Left lung (tissue), 14 donors: ENCODE measurements at regions of chr12 and their contacts with region 1.

Region 1: GRCh38 chr12:75404231-75404630 is 13.3 kb downstream of the GLIPR1L2 start:
- DNase-seq: no peak
- ATAC-seq: no peak
- H3K4me3 ChIP-seq: no peak overlapping the region
- H3K27ac ChIP-seq: no peak overlapping the region
- H3K4me1 ChIP-seq: no peaks in the 10 kb centered on the region
- H3K27me3 ChIP-seq: no peaks in the 10 kb centered on the region
- CTCF ChIP-seq: no peak

Region 2: DNA sequence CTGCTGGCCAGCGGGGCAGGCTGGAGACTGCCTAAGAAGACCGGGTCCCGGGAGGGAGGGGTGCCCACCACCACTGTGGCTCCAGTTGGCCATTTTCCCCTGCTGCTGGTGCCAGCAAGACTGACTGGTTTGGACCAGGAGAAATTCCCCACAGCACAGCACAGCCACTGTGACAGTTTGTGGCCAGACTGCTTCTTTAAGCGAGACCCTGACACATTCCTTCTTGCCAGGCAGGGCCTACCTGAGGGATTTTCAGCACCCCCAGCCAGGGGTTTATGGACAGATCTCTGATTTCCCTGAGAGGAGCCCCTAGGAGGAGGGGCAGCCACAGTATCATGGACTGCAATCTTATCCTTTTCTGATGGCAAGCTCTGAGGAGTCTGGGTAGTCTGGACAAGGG is 54.3 kb before region 1 on chr12:
- intact Hi-C with region 1: loop called in 1 of 2 experiments (anchors 10 kb)
- DNase-seq: peak in 1 of 4 donors; percentile 37
- ATAC-seq: no peak
- H3K4me3 ChIP-seq: no peak overlapping the region
- H3K27ac ChIP-seq: no peak overlapping the region
- H3K4me1 ChIP-seq: no peaks in the 10 kb centered on the region
- H3K27me3 ChIP-seq: no peaks in the 10 kb centered on the region
- CTCF ChIP-seq: no peak

Region 3: GRCh38 chr12:75511116-75512048 is 107.2 kb after region 1 on chr12 and contains the start of gene KRR1:
- intact Hi-C with region 1: no loop called
- DNase-seq: peak; percentile 89 to 98 (median 94)
- ATAC-seq: peak; percentile 99
- H3K4me3 ChIP-seq: peak within 1 kb of the TSS; percentile 77 to 79
- H3K27ac ChIP-seq: peak within 1 kb of the TSS; percentile 63 to 71
- H3K4me1 ChIP-seq: peaks cover 9 to 23% of the 10 kb centered on the region in 2 donors
- H3K27me3 ChIP-seq: no peaks in the 10 kb centered on the region
- CTCF ChIP-seq: peak in 1 of 2 donors; percentile 1
- polyA plus RNA-seq, gene KRR1: 73.8 to 101 (median 89.7) TPM